ENCODE measurements at regions of chr5 and their contacts with region 1.

Region 1: DNA sequence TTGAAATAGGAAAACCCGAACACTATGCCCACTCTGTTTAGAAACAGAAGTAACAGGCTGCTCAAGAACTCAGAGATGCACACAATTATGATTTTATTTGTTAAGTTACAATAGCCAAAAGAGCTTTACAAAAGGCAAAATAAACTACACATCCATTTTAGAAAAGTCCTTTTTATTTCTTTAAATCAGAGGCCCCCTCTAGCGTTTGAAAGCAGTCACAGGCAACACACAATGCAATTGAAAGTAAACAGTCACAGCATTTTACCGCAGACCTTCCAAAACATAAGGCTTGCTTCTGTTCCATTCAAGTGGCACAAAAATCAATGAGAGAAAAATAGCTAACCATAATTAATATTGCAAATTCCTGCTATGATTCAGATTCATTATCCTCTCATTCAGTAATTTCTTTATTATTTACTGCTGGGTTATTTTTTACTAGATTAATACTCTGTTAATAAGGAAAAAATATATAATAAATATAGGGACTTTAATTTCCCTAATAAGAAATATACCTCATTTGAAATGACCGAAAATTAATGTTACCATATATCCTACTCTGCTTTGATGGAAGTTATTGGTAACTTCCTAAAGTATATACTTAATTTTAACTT is 78.3 kb downstream of the CEP120 start:
- DNase-seq: peak; percentile 4
- H3K4me3 ChIP-seq: no peak overlapping the region
- H3K27ac ChIP-seq: no peak overlapping the region
- H3K4me1 ChIP-seq: no peaks in the 10 kb centered on the region
- H3K27me3 ChIP-seq: no peaks in the 10 kb centered on the region
- CTCF ChIP-seq: peak; percentile 42 to 51

Region 2: GRCh38 chr5:122500245-122501075 is 844.5 kb before region 1 on chr5:
- CTCF ChIA-PET with region 1: no interaction called
- dilution Hi-C with region 1: no loop called
- in situ Hi-C with region 1: loop called (anchors 25 kb)
- intact Hi-C with region 1: loop called (anchors 1 kb)
- DNase-seq: peak; percentile 30
- H3K4me3 ChIP-seq: no peak overlapping the region
- H3K27ac ChIP-seq: no peak overlapping the region
- H3K4me1 ChIP-seq: no peaks in the 10 kb centered on the region
- H3K27me3 ChIP-seq: no peaks in the 10 kb centered on the region
- CTCF ChIP-seq: peak; percentile 49 to 62

Region 3: GRCh38 chr5:122896598-122897282 is 448.2 kb before region 1 on chr5:
- CTCF ChIA-PET with region 1: no interaction called
- dilution Hi-C with region 1: no loop called
- in situ Hi-C with region 1: no loop called
- intact Hi-C with region 1: loop called (anchors 10 kb)
- DNase-seq: peak; percentile 9
- H3K4me3 ChIP-seq: no peak overlapping the region
- H3K27ac ChIP-seq: no peak overlapping the region
- H3K4me1 ChIP-seq: no peaks in the 10 kb centered on the region
- H3K27me3 ChIP-seq: no peaks in the 10 kb centered on the region
- CTCF ChIP-seq: peak; percentile 48 to 60

Region 4: DNA sequence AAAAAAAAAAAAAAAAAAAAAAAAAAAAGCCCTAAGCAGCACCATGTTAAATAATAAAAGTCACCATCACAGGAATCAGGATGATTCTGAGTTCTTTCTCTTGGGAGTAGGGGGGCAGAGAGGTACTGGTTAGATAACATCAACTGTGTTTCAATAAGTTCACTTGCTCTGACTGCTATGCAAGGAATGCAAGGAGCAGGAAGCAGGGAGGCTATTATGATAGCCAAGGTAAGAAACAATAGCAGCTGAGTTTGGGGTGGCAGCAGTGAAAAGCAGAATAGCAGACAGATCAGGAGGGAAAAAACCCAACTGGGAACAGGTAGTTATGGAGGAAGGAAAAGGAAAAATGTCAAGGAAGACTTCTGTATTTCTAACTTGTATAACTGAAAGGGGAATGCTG is 70.1 kb after region 1 on chr5:
- CTCF ChIA-PET with region 1: no interaction called
- dilution Hi-C with region 1: no loop called
- in situ Hi-C with region 1: no loop called
- intact Hi-C with region 1: no loop called
- DNase-seq: no peak
- H3K4me3 ChIP-seq: no peak overlapping the region
- H3K27ac ChIP-seq: no peak overlapping the region
- H3K4me1 ChIP-seq: no peaks in the 10 kb centered on the region
- H3K27me3 ChIP-seq: no peaks in the 10 kb centered on the region
- CTCF ChIP-seq: no peak

Region 5: GRCh38 chr5:123628860-123629556 is 284.1 kb after region 1 on chr5:
- CTCF ChIA-PET with region 1: no interaction called
- dilution Hi-C with region 1: no loop called
- in situ Hi-C with region 1: no loop called
- intact Hi-C with region 1: no loop called
- DNase-seq: no peak
- H3K4me3 ChIP-seq: no peak overlapping the region
- H3K27ac ChIP-seq: no peak overlapping the region
- H3K4me1 ChIP-seq: no peaks in the 10 kb centered on the region
- H3K27me3 ChIP-seq: no peaks in the 10 kb centered on the region
- CTCF ChIP-seq: no peak